Activated CD4-positive, alpha-beta memory T cell treated with anti-CD3 and anti-CD28 coated beads, Interleukin-2, amount 10 ng/mL, durations not matched to agents 7 days and 5 days (primary cell): ENCODE measurements at regions of chr17 and their contacts with region 1.

Region 1: DNA sequence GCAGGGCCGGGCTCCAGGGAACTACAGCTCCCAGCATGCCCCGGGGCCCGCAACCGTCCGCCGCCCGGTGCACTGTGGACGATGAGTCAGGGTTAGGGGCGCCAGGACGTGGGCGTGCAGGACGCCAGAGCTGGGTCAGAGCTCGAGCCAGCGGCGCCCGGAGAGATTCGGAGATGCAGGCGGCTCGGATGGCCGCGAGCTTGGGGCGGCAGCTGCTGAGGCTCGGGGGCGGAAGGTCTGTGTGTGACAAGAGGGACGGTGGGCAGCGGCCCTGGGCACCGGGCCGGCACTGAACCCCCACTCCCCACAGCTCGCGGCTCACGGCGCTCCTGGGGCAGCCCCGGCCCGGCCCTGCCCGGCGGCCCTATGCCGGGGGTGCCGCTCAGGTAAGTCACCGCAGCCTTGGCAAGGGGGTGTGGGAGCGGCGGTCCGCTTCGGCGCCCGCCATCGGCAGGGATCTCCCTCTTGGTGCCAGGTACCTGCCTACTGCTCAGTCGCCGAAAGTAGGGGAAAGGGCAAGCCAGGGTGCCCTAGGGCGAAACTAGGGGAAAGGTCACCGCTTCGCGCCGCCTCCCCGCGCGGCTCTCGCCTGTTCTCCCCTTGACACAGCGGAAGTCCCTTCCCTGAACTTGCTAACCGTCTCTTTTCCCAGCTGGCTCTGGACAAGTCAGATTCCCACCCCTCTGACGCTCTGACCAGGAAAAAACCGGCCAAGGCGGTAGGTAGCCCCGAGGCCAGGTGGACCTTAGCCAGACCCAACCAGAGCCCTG is at the starts of genes ACADVL and DLG4:
- DNase-seq: peak; percentile 84
- H3K4me3 Mint-ChIP-seq: peak within 1 kb of the TSS; percentile 93
- H3K27ac Mint-ChIP-seq: peak within 1 kb of the TSS; percentile 89
- H3K4me1 Mint-ChIP-seq: peaks cover 48% of the 10 kb centered on the region
- H3K27me3 Mint-ChIP-seq: no peaks in the 10 kb centered on the region
- total RNA-seq, gene ACADVL: 364 to 370 TPM
- total RNA-seq, gene DLG4: 5.2 to 5.3 TPM

Region 2: GRCh38 chr17:7234083-7234951 is 14.3 kb after region 1 on chr17 and contains the start of gene DVL2:
- CTCF ChIA-PET with region 1: interaction called, 44 read pairs
- POLR2A ChIA-PET with region 1: interaction called, 100 read pairs
- DNase-seq: peak; percentile 95
- H3K4me3 Mint-ChIP-seq: peak within 1 kb of the TSS; percentile 96
- H3K27ac Mint-ChIP-seq: peak within 1 kb of the TSS; percentile 81
- H3K4me1 Mint-ChIP-seq: peaks cover 54% of the 10 kb centered on the region
- H3K27me3 Mint-ChIP-seq: no peaks in the 10 kb centered on the region
- total RNA-seq, gene DVL2: 47.2 to 49.1 TPM

Region 3: GRCh38 chr17:7252176-7253043 is 32.4 kb after region 1 on chr17 and contains the start of gene ELP5:
- CTCF ChIA-PET with region 1: interaction called, 5 read pairs
- POLR2A ChIA-PET with region 1: interaction called, 10 read pairs
- DNase-seq: peak; percentile 93
- H3K4me3 Mint-ChIP-seq: peak within 1 kb of the TSS; percentile 91
- H3K27ac Mint-ChIP-seq: peak within 1 kb of the TSS; percentile 97
- H3K4me1 Mint-ChIP-seq: peaks cover 46% of the 10 kb centered on the region
- H3K27me3 Mint-ChIP-seq: no peaks in the 10 kb centered on the region
- total RNA-seq, gene ELP5: 40.4 to 42.1 TPM